ENCODE measurements at regions of chr19 and their contacts with region 1.

Region 1: DNA sequence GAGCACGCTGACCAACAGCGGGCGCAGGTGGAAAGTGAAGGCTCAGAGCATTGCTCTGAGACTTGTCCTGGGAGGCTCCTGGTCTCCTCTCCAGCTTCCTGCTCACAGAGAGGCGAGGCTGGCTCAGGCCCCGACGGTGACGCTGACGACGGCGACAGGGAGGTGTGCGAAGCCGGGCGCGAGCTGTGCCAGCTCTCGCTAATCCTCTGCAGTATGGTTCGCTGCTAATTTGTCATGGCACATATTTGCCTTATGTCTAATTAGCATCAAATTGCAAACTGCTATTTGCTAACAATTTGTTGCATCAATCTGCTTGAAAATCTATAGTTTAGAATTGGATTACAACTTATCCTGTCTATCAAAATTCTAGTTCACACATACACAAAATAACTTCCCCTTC is 469.8 kb upstream of the ZNF507 start:
- DNase-seq: no peak
- ATAC-seq: no peak
- H3K4me3 ChIP-seq: no peak overlapping the region
- H3K27ac ChIP-seq: no peak overlapping the region
- H3K4me1 ChIP-seq: peaks cover 0 to 3% (median 0%) of the 10 kb centered on the region in 9 donors
- H3K27me3 ChIP-seq: peaks cover 0 to 10% (median 0%) of the 10 kb centered on the region in 7 donors
- CTCF ChIP-seq: no peak

Region 2: GRCh38 chr19:31943191-31943661 is 67.6 kb after region 1 on chr19:
- intact Hi-C with region 1: loop called in 1 of 10 experiments (anchors 1 kb)
- DNase-seq: no peak
- ATAC-seq: no peak
- H3K4me3 ChIP-seq: no peak overlapping the region
- H3K27ac ChIP-seq: no peak overlapping the region
- H3K4me1 ChIP-seq: peaks cover 0 to 10% (median 3%) of the 10 kb centered on the region in 9 donors
- H3K27me3 ChIP-seq: peaks cover 0 to 4% (median 0%) of the 10 kb centered on the region in 7 donors
- CTCF ChIP-seq: peak in 4 of 9 donors; percentile 13 to 20 (median 15)